Activated CD4-positive, alpha-beta T cell treated with anti-CD3 and anti-CD28 coated beads for 36 hours (primary cell): ENCODE measurements at regions of chr7 and their contacts with region 1.

Region 1: DNA sequence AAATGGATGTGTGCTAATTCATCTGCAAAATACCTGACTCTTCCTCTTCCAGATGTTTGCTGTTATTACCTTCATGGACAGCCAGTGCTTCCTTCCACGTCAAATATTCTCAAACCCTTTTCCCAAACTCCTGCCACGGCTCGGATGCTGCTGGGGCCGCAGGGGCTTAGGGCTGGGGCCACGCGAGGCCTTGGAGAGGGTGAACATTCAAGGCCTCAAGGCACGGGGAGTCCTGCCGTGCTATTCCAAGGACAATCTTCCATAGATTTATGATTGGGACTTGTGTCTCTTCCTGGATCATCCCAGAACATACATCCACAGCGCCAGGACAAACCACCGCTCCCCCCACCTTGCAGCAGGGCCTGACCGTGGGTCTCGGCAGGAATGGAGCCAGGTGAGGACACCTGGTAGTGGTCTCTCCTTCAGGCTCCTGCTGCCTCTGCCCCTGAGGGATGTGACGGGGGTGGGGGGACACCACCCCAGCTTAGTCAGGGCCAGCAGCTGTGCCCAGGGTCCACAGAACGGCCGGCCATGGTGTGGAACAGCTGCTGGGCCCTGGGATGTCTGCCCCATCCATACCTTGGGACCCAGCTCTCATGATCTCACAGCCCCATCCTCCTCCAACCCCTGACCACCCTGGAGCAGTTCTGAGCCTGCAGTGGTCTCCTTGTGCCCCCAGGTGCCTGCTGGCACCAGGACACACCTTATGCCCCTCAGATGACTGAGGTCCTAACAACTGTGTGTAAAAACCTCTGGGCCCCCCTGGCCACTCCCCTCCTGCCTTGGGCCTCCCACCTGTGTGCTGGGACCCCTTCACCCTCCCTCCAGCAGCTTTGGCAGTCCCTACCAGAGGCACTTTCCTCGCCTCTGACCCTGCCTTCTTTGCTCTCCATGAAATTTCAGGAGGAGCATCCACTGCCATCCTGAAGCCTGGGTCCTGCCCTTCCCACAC is 16.7 kb downstream of the VIPR2 start:
- DNase-seq: no peak
- ATAC-seq: no peak
- H3K4me3 Mint-ChIP-seq: no peak overlapping the region
- H3K27ac Mint-ChIP-seq: no peak overlapping the region
- H3K4me1 Mint-ChIP-seq: no peaks in the 10 kb centered on the region
- H3K27me3 Mint-ChIP-seq: no peaks in the 10 kb centered on the region

Region 2: GRCh38 chr7:158976849-158977593 is 150.9 kb before region 1 on chr7:
- CTCF ChIA-PET with region 1: no interaction called
- POLR2A ChIA-PET with region 1: no interaction called
- intact Hi-C with region 1: no loop called
- DNase-seq: peak; percentile 94
- ATAC-seq: peak; percentile 82
- H3K4me3 Mint-ChIP-seq: peak overlapping the region; percentile 69
- H3K27ac Mint-ChIP-seq: peak overlapping the region; percentile 93
- H3K4me1 Mint-ChIP-seq: peaks cover 20% of the 10 kb centered on the region
- H3K27me3 Mint-ChIP-seq: no peaks in the 10 kb centered on the region

Region 3: DNA sequence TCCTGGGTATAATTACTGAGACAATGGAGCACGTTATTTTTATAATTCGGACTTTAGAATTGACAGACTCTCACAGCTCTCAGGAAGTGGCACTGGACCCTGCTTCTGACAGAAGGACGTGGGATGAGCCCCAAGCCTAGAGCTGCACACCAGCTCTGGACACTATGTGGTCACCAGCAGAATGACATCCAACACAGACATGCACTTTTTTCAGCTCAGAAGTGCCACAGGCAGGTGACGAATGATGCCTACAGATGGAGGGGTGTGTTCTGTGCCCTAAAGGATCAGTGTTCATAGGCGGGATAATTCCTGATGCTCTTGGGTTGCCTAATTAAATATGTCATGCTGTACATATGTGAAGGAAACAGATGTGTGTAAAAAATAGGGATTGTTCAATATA is 71.2 kb before region 1 on chr7:
- CTCF ChIA-PET with region 1: no interaction called
- POLR2A ChIA-PET with region 1: no interaction called
- intact Hi-C with region 1: no loop called
- DNase-seq: no peak
- ATAC-seq: no peak
- H3K4me3 Mint-ChIP-seq: no peak overlapping the region
- H3K27ac Mint-ChIP-seq: no peak overlapping the region
- H3K4me1 Mint-ChIP-seq: peaks cover 4% of the 10 kb centered on the region
- H3K27me3 Mint-ChIP-seq: no peaks in the 10 kb centered on the region

Region 4: GRCh38 chr7:159158888-159159405 is 31.0 kb after region 1 on chr7:
- CTCF ChIA-PET with region 1: no interaction called
- POLR2A ChIA-PET with region 1: no interaction called
- intact Hi-C with region 1: loop called (anchors 1 to 2 kb)
- DNase-seq: no peak
- ATAC-seq: no peak
- H3K4me3 Mint-ChIP-seq: no peak overlapping the region
- H3K27ac Mint-ChIP-seq: no peak overlapping the region
- H3K4me1 Mint-ChIP-seq: no peaks in the 10 kb centered on the region
- H3K27me3 Mint-ChIP-seq: no peaks in the 10 kb centered on the region